ENCODE measurements at regions of chr3 and their contacts with region 1.

Region 1: GRCh38 chr3:172039436-172040077 is at the start of gene FNDC3B:
- DNase-seq: peak; percentile 90 to 93 (median 91)
- H3K4me3 ChIP-seq: peak within 1 kb of the TSS; percentile 61 to 62
- H3K4me3 Mint-ChIP-seq: peak within 1 kb of the TSS; percentile 94 to 99 (median 97)
- H3K27ac ChIP-seq: peak within 1 kb of the TSS; percentile 92
- H3K27ac Mint-ChIP-seq: peak within 1 kb of the TSS; percentile 94 to 99 (median 96)
- H3K4me1 ChIP-seq: peaks cover 29% of the 10 kb centered on the region
- H3K4me1 Mint-ChIP-seq: peaks cover 25 to 58% (median 37%) of the 10 kb centered on the region in 4 donors
- H3K27me3 ChIP-seq: no peaks in the 10 kb centered on the region
- H3K27me3 Mint-ChIP-seq: no peaks in the 10 kb centered on the region
- total RNA-seq, gene FNDC3B: 18.0 to 18.2 TPM

Region 2: GRCh38 chr3:170309046-170309445 is 1730.5 kb before region 1 on chr3:
- CTCF ChIA-PET with region 1: no interaction called
- POLR2A ChIA-PET with region 1: no interaction called
- intact Hi-C with region 1: no loop called
- DNase-seq: no peak
- H3K4me3 ChIP-seq: no peak overlapping the region
- H3K4me3 Mint-ChIP-seq: no peak overlapping the region
- H3K27ac ChIP-seq: no peak overlapping the region
- H3K27ac Mint-ChIP-seq: no peak overlapping the region
- H3K4me1 ChIP-seq: no peaks in the 10 kb centered on the region
- H3K4me1 Mint-ChIP-seq: peaks cover 0 to 1% (median 0%) of the 10 kb centered on the region in 4 donors
- H3K27me3 ChIP-seq: no peaks in the 10 kb centered on the region
- H3K27me3 Mint-ChIP-seq: no peaks in the 10 kb centered on the region

Region 3: DNA sequence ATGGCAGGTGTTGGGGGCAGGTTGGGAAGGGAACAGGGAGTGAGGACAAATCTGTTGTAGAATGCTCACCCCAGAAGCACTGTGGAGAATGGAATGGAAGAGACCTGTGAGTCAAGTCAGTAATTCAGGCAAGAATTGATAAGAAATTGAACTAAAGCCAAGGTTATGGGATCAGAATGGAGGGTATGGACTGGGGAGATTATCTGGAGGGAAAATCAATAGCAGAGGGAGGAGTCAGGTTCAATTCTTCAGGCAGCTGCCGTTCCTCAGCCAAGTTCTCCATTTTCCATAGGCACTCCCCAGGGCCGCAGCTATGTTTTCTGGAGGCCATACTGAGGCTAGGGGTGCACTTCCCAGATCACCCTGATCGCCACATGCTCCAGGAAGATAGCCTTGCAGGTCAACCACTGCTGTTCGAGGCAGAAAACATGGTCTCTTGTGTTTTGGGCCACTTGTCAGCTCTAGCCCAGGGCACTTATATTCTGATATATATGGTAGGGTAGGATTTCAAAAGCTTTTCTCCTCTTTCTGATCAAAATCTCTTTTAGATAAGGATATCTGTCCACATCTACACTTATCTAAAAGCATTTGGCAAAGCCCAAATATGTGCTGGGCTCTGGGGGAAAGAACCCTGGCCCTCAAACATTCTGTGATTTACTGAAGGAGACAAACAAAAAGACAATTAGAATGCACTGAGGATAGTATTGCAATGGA is 104.1 kb before region 1 on chr3:
- CTCF ChIA-PET with region 1: no interaction called
- POLR2A ChIA-PET with region 1: no interaction called
- intact Hi-C with region 1: loop called (anchors 2 kb)
- DNase-seq: no peak
- H3K4me3 ChIP-seq: no peak overlapping the region
- H3K4me3 Mint-ChIP-seq: no peak overlapping the region
- H3K27ac ChIP-seq: no peak overlapping the region
- H3K27ac Mint-ChIP-seq: no peak overlapping the region
- H3K4me1 ChIP-seq: no peaks in the 10 kb centered on the region
- H3K4me1 Mint-ChIP-seq: peaks cover 0 to 3% (median 0%) of the 10 kb centered on the region in 4 donors
- H3K27me3 ChIP-seq: no peaks in the 10 kb centered on the region
- H3K27me3 Mint-ChIP-seq: peaks cover 0 to 5% of the 10 kb centered on the region in 2 donors

Region 4: DNA sequence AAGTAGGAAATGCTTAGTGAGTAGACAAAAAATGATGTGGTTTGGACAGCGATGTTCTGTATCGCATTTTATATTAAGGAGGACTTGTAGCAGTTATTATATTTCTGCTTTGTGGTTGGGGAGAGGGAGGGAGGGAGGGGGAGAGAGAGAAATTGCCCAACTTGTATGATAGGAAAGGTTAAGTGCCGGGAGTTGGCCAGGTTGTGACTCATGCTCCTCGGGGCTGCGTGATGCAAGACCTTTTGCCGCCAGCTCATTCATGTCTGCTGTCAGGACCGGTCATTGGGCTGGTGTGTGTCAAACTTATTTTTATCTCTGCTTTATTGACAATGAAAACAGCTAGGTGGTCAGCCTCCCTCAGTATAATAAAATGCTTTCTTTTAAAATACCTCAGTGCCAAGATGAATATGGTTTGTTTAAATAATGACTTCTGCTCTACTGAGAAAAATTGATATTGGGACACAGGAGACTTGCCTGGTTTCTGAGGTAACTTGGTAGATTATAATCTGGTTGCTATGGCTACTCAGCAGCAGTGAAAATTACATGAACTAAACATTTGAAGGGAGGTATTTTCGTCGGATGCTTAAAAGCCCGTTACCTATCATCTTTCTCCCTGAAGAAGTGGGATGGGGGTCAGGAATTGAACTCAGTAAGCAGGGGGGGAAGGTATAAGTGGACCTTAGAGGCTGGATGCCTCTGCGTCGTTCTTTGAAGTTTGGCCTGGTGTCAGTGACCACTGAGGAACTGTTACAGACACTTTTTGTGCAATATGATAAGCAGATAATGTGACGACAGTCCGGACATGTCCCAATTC is 90.5 kb after region 1 on chr3:
- CTCF ChIA-PET with region 1: interaction called, 8 read pairs
- POLR2A ChIA-PET with region 1: no interaction called
- intact Hi-C with region 1: loop called (anchors 1 kb)
- DNase-seq: peak; percentile 64 to 90 (median 72)
- H3K4me3 ChIP-seq: no peak overlapping the region
- H3K4me3 Mint-ChIP-seq: peak overlapping the region; percentile 55 to 81 (median 72)
- H3K27ac ChIP-seq: peak overlapping the region; percentile 46
- H3K27ac Mint-ChIP-seq: peak overlapping the region; percentile 88 to 99 (median 95)
- H3K4me1 ChIP-seq: peaks cover 57% of the 10 kb centered on the region
- H3K4me1 Mint-ChIP-seq: peaks cover 49 to 77% (median 56%) of the 10 kb centered on the region in 4 donors
- H3K27me3 ChIP-seq: no peaks in the 10 kb centered on the region
- H3K27me3 Mint-ChIP-seq: no peaks in the 10 kb centered on the region

Region 5: DNA sequence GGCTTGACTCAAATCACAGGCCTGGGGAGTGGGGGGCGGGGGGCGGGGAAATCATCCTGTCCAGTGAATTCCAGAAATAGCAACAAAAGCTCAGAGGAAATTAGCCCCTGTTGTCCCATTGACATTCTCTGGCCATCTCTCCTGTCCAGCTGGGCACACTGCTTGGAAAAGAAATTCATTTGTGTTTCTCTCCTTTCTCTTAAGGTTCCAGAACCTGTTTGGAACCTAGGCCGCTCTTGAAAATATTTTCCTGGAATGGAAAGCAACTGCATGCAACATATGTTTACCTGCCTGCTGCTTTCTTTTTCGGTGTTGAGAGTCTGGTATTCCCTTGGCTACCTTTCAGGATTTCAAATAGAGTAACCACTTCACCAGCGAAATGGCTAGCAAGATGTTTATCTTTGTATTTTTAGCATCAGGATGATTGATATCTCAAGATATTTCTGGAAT is 239.7 kb after region 1 on chr3:
- CTCF ChIA-PET with region 1: interaction called, 45 read pairs
- POLR2A ChIA-PET with region 1: no interaction called
- intact Hi-C with region 1: loop called (anchors 1 kb)
- DNase-seq: no peak
- H3K4me3 ChIP-seq: no peak overlapping the region
- H3K4me3 Mint-ChIP-seq: no peak overlapping the region
- H3K27ac ChIP-seq: no peak overlapping the region
- H3K27ac Mint-ChIP-seq: no peak overlapping the region
- H3K4me1 ChIP-seq: no peaks in the 10 kb centered on the region
- H3K4me1 Mint-ChIP-seq: peaks cover 0 to 6% (median 5%) of the 10 kb centered on the region in 4 donors
- H3K27me3 ChIP-seq: no peaks in the 10 kb centered on the region
- H3K27me3 Mint-ChIP-seq: no peaks in the 10 kb centered on the region

Region 6: GRCh38 chr3:172367205-172368105 is 327.9 kb after region 1 on chr3:
- CTCF ChIA-PET with region 1: no interaction called
- POLR2A ChIA-PET with region 1: no interaction called
- intact Hi-C with region 1: no loop called
- DNase-seq: no peak
- H3K4me3 ChIP-seq: no peak overlapping the region
- H3K4me3 Mint-ChIP-seq: no peak overlapping the region
- H3K27ac ChIP-seq: no peak overlapping the region
- H3K27ac Mint-ChIP-seq: peak overlapping the region in 1 of 7 donors; percentile 7
- H3K4me1 ChIP-seq: no peaks in the 10 kb centered on the region
- H3K4me1 Mint-ChIP-seq: no peaks in the 10 kb centered on the region
- H3K27me3 ChIP-seq: no peaks in the 10 kb centered on the region
- H3K27me3 Mint-ChIP-seq: no peaks in the 10 kb centered on the region

Region 7: DNA sequence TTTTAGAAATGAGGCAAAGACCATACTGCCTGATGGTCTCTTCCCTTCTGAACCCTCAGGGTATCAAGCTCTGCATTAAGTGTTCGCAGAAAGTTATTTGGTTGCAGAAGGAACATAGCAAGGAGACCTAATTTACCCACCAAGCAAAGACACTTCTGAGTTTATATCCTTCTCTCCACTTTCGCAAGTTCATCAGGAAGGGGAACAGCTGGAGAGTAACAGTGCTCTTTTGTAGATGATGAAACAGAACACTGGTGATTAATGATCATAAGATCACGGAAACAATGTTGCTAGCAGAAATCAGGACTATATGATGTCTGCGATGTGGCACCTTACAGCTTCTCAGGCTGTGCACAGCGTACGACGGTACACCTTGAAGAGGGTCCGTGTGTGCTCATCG is 609.2 kb after region 1 on chr3:
- CTCF ChIA-PET with region 1: no interaction called
- POLR2A ChIA-PET with region 1: no interaction called
- intact Hi-C with region 1: no loop called
- DNase-seq: no peak
- H3K4me3 ChIP-seq: no peak overlapping the region
- H3K4me3 Mint-ChIP-seq: no peak overlapping the region
- H3K27ac ChIP-seq: no peak overlapping the region
- H3K27ac Mint-ChIP-seq: no peak overlapping the region
- H3K4me1 ChIP-seq: no peaks in the 10 kb centered on the region
- H3K4me1 Mint-ChIP-seq: no peaks in the 10 kb centered on the region
- H3K27me3 ChIP-seq: no peaks in the 10 kb centered on the region
- H3K27me3 Mint-ChIP-seq: no peaks in the 10 kb centered on the region

Region 8: GRCh38 chr3:172750368-172751174 is 711.0 kb after region 1 on chr3 and contains the start of gene ECT2:
- CTCF ChIA-PET with region 1: no interaction called
- POLR2A ChIA-PET with region 1: no interaction called
- intact Hi-C with region 1: loop called (anchors 1 kb)
- DNase-seq: peak; percentile 94 to 99 (median 97)
- H3K4me3 ChIP-seq: peak within 1 kb of the TSS; percentile 73 to 76
- H3K4me3 Mint-ChIP-seq: peak within 1 kb of the TSS; percentile 94 to 99 (median 98)
- H3K27ac ChIP-seq: peak within 1 kb of the TSS; percentile 65
- H3K27ac Mint-ChIP-seq: peak within 1 kb of the TSS; percentile 84 to 96 (median 94)
- H3K4me1 ChIP-seq: peaks cover 26% of the 10 kb centered on the region
- H3K4me1 Mint-ChIP-seq: peaks cover 19 to 38% (median 27%) of the 10 kb centered on the region in 4 donors
- H3K27me3 ChIP-seq: no peaks in the 10 kb centered on the region
- H3K27me3 Mint-ChIP-seq: no peaks in the 10 kb centered on the region
- total RNA-seq, gene ECT2: 2.4 to 2.9 TPM

Region 9: DNA sequence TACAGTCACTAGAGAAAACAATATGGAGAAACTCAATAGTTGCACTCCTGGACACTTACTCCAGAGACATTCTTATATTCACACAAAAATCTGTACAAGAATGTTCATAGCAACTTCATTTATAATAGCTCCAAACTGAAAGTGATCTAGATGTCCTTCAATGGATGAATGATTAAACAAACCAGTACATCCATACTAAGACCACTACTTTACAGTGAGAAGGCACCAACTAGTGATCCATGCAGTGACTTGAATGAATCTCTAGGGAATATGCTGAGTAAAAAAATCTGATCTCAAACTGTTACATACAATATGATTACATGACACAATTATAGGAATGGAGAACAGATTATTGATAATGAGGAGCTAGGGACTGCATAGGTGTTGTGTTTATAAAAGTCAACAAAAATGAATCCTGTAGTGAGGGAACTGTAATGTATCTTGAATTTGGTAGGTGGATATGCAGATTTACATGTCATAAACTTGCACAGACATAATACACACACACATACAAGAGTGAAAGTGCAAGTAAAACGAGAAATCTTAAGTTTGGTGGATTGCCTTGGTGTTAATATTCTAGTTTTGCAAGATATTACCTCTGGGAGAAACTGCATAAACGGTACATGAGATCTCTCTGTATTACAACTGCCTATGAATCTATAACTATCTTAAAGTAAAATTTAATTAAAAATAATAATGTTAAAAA is 1015.8 kb after region 1 on chr3:
- CTCF ChIA-PET with region 1: no interaction called
- POLR2A ChIA-PET with region 1: no interaction called
- intact Hi-C with region 1: no loop called
- DNase-seq: no peak
- H3K4me3 ChIP-seq: no peak overlapping the region
- H3K4me3 Mint-ChIP-seq: no peak overlapping the region
- H3K27ac ChIP-seq: no peak overlapping the region
- H3K27ac Mint-ChIP-seq: no peak overlapping the region
- H3K4me1 ChIP-seq: no peaks in the 10 kb centered on the region
- H3K4me1 Mint-ChIP-seq: peaks cover 0 to 3% (median 1%) of the 10 kb centered on the region in 4 donors
- H3K27me3 ChIP-seq: no peaks in the 10 kb centered on the region
- H3K27me3 Mint-ChIP-seq: no peaks in the 10 kb centered on the region